GM18951 (cell line): ENCODE measurements at regions of chr5 and their contacts with region 1.

Region 1: GRCh38 chr5:56190497-56190896 is 42.6 kb downstream of the ANKRD55 start:
- POLR2A ChIP-seq: no peak

Region 2: GRCh38 chr5:55737793-55738192 is 452.7 kb before region 1 on chr5 and contains the start of gene DDX4:
- in situ Hi-C with region 1: no loop called
- POLR2A ChIP-seq: no peak

Region 3: DNA sequence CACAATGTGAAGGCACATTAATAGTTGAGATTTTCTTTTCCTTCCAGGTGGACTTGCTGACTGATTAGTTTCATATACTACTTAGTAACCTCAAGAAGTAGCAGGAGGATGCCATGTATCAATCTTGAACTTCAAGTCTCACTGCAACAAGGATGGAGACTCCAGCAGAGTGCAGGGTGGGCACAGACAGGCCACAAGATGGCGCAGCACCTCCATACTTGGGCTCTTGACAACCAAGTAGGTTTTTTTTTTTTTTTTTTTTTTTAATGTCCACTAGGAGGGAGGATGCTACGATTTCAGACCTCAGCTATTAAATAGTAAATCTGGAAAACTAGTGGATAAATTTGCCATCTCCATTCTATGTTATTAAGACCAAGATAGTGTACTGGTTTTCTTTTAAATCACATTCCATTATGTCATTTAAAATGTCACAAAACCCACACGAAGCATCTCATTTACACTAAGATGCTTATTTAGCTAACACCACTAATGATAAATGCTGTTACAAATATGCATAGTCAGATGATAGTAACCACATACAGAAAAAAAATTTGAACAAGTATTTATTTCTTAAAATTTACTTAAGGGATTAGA is 254.3 kb before region 1 on chr5:
- in situ Hi-C with region 1: loop called (anchors 10 kb)
- POLR2A ChIP-seq: peak; percentile 23